PC-3 (cell line): ENCODE measurements at regions of chr21 and their contacts with region 1.

Region 1: GRCh38 chr21:35400233-35400957 is 351.3 kb upstream of the RUNX1 start:
- DNase-seq: peak; percentile 90
- ATAC-seq: peak; percentile 82
- H3K4me3 ChIP-seq: no peak overlapping the region
- H3K27ac ChIP-seq: peak overlapping the region; percentile 1; the same call in 1 of the 2 replicates
- H3K4me1 ChIP-seq: peaks cover 41% of the 10 kb centered on the region
- H3K27me3 ChIP-seq: no peaks in the 10 kb centered on the region
- CTCF ChIP-seq: peak; percentile 87

Region 2: GRCh38 chr21:34693192-34693810 is 707.1 kb before region 1 on chr21:
- CTCF ChIA-PET with region 1: no interaction called
- POLR2A ChIA-PET with region 1: no interaction called
- intact Hi-C with region 1: loop called (anchors 5 kb)
- DNase-seq: peak; percentile 83
- ATAC-seq: peak; percentile 65
- H3K4me3 ChIP-seq: no peak overlapping the region
- H3K27ac ChIP-seq: no peak overlapping the region
- H3K4me1 ChIP-seq: peaks cover 38% of the 10 kb centered on the region
- H3K27me3 ChIP-seq: no peaks in the 10 kb centered on the region
- CTCF ChIP-seq: peak; percentile 93

Region 3: GRCh38 chr21:34888569-34889319 is 511.7 kb before region 1 on chr21:
- CTCF ChIA-PET with region 1: interaction called, 7 read pairs
- POLR2A ChIA-PET with region 1: interaction called, 3 read pairs
- intact Hi-C with region 1: loop called (anchors 1 kb)
- DNase-seq: peak; percentile 97
- ATAC-seq: peak; percentile 52
- H3K4me3 ChIP-seq: peak overlapping the region; percentile 95
- H3K27ac ChIP-seq: peak overlapping the region; percentile 90
- H3K4me1 ChIP-seq: peaks cover 16% of the 10 kb centered on the region; the same call in 1 of the 2 replicates
- H3K27me3 ChIP-seq: no peaks in the 10 kb centered on the region
- CTCF ChIP-seq: no peak

Region 4: DNA sequence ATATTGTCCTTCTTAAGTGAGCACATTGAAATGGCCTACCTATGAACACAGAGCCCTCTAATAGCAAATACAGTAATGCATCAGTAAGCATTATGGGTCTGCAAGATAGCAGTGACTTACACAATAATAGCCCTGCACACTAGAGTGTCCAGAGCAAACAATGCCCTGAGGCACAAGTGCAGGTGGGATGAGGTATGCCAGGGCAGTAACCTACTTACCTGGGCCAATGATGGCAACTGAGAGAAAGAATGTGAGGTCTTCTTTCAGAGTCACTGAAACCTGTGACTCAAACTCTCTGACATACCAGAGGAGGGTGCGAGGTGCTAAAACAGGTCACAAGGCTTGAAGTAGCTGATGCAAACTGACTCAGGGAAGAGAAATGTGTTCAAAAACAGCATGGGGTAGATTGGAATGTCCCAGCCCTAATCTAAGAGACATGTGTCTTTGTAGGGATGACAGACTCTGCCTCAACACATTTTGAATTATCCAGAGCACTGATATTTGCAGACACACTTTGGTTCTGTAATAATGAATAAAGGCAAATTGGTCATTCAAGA is 182.8 kb before region 1 on chr21:
- CTCF ChIA-PET with region 1: interaction called, 3 read pairs
- POLR2A ChIA-PET with region 1: no interaction called
- intact Hi-C with region 1: loop called (anchors 5 kb)
- DNase-seq: peak; percentile 100
- ATAC-seq: peak; percentile 91
- H3K4me3 ChIP-seq: no peak overlapping the region
- H3K27ac ChIP-seq: peak overlapping the region; percentile 88
- H3K4me1 ChIP-seq: peaks cover 45% of the 10 kb centered on the region
- H3K27me3 ChIP-seq: no peaks in the 10 kb centered on the region
- CTCF ChIP-seq: no peak

Region 5: GRCh38 chr21:35375115-35375514 is 25.3 kb before region 1 on chr21:
- CTCF ChIA-PET with region 1: no interaction called
- POLR2A ChIA-PET with region 1: no interaction called
- intact Hi-C with region 1: no loop called
- DNase-seq: peak; percentile 61
- ATAC-seq: peak; percentile 46
- H3K4me3 ChIP-seq: no peak overlapping the region
- H3K27ac ChIP-seq: no peak overlapping the region
- H3K4me1 ChIP-seq: peaks cover 12% of the 10 kb centered on the region
- H3K27me3 ChIP-seq: no peaks in the 10 kb centered on the region
- CTCF ChIP-seq: no peak

Region 6: DNA sequence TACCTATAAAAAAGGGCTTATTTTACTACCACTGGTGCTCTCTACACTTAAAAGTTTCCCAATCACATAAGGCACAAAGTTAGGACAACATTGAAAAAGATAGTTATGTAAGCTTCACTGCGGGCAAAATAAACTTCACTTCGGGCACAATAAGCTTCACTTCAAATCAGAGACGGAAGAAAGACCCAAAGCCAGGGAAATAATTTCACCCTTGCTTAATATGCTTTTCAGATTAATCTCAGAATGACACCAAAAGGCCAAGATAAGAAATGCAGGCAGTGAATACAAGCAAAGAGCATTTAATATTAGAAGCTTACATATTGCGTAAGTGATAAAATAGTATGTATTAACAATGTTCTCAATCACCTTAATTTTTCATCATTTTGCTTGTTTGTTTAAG is 215.7 kb after region 1 on chr21:
- CTCF ChIA-PET with region 1: no interaction called
- POLR2A ChIA-PET with region 1: no interaction called
- intact Hi-C with region 1: loop called (anchors 2 kb)
- DNase-seq: peak; percentile 49
- ATAC-seq: no peak; the same call in 1 of the 2 replicates
- H3K4me3 ChIP-seq: no peak overlapping the region
- H3K27ac ChIP-seq: no peak overlapping the region
- H3K4me1 ChIP-seq: peaks cover 22% of the 10 kb centered on the region
- H3K27me3 ChIP-seq: no peaks in the 10 kb centered on the region
- CTCF ChIP-seq: peak; percentile 72

Region 7: DNA sequence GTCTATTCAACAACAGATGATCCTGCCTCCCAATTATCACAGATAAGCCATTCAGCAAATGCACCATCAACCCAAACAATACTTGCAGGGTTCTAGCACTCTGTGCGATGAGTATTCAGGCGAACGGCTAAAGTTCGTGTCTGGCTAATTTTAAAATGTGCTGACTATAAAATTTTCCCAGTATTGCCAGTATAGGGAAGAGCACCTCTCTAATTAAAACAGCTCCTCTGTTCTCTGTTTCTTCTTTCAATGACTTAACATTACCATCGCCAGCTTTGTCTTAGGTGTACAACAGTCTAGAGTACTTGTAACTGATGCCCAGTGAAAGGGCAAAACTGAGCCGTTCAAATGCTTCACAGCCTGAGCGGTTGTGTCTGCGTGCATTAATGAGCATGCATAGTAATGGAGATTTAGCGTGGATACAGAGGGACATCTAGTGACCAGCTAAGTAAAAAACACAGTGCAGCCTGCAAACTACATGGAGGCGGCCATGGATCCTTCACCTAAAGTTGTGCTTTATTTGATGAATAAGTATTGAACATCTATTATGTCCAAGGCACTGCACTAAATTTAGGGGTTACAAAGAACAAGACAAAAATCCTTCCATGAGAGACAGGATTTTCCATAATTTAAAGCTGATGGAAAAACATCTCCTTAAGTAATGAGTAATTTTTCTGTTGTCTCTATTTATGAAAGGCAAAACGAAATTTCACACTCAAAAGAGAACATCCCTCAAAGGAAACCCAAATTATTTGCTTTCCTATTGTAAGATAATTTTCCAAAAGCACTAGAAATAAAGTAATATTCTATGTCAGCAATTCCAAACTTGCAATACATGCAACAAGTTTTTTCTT is 539.9 kb after region 1 on chr21:
- CTCF ChIA-PET with region 1: no interaction called
- POLR2A ChIA-PET with region 1: no interaction called
- intact Hi-C with region 1: loop called (anchors 1 kb)
- DNase-seq: peak; percentile 86
- ATAC-seq: peak; percentile 99
- H3K4me3 ChIP-seq: no peak overlapping the region
- H3K27ac ChIP-seq: no peak overlapping the region
- H3K4me1 ChIP-seq: peaks cover 4% of the 10 kb centered on the region
- H3K27me3 ChIP-seq: no peaks in the 10 kb centered on the region
- CTCF ChIP-seq: peak; percentile 91